ENCODE measurements at regions of chr3 and their contacts with region 1.

Region 1: DNA sequence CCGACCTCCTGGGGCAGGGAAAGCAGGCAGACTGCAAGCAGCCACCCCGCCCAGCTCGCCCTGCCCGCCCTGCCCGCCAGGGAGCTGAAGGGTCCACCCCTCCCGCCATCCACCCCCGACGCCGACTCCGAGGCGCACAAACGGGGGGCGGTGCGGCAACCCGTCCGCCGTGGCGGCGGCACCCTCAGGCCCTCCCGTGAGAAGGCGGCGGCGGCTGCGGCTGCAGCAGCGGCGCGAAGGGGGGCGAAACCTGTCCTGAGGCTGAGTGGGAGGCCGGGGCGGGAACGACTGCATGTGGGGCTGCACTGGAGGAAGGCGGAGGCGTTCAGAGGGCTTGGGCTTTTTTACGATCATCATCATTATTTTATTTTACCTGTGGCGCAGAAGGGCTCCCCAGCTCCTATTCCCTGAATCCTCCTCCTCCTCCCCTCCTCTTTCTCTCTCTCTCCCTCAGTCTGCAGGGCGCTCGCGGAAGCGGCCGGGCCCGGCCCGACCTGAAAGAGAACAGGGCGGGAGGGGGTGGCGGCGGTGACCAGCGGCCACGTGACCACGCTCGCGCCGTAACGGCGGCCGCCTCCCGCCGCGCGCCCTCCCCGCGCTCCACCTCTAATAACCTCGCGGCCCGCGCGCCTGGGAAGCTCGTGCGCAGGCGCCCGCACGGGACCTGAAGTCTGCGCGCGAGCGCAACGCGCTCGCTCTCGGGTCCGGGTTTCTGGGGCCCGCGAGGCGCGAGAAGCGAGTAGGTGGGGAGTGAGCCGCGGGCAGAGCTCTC is at the start of gene TBC1D5:
- DNase-seq: peak; percentile 96 to 99
- ATAC-seq: peak; percentile 96 to 97 (median 96)
- H3K4me3 ChIP-seq: peak within 1 kb of the TSS; percentile 94
- H3K27ac ChIP-seq: peak within 1 kb of the TSS; percentile 95
- H3K4me1 ChIP-seq: peaks cover 19% of the 10 kb centered on the region
- H3K27me3 ChIP-seq: no peaks in the 10 kb centered on the region
- CTCF ChIP-seq: no peak
- total RNA-seq, gene TBC1D5: 10.6 to 20.4 (median 18.2) TPM

Region 2: DNA sequence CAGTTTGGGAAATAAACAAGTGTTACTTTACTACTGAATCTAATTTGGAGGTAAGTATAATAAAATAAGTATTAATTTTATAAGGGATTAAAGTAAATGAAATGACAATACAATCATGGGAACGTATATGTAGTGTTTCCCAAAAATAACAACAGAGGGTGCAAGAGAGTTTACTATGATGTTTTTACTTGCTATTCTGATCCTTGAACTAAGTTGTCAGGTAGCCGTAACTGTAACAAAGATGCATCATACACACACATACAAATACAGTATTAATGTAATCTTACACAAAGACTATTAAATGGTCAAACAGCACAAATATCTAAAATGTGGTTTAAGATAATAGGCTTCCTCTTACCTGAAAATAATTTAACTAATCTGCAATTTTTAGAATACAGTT is 311.3 kb before region 1 on chr3:
- intact Hi-C with region 1: loop called in 1 of 2 experiments (anchors 10 kb)
- DNase-seq: no peak
- ATAC-seq: peak; percentile 53 to 85 (median 72)
- H3K4me3 ChIP-seq: no peak overlapping the region
- H3K27ac ChIP-seq: no peak overlapping the region
- H3K4me1 ChIP-seq: peaks cover 9% of the 10 kb centered on the region
- H3K27me3 ChIP-seq: no peaks in the 10 kb centered on the region
- CTCF ChIP-seq: peak; percentile 55

Region 3: DNA sequence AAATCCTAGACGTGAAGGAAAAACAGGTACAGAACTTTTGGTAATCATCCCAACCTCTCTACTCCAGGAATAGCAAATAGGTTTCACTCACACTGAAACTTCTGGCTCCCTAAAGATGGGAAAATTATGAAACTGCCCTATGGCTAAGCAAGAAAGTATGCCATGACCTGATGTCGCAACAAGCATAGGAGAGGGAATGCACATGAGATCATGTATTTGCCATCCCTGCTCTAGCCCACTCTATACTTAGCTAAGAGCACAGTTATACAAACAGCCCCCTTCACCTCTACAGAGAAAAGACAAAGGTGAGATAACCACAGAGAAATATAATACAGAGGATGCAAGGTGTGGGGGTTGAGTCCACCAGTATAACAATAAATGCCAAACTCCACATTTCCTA is 102.5 kb before region 1 on chr3:
- intact Hi-C with region 1: loop called in 1 of 2 experiments (anchors 5 kb)
- DNase-seq: no peak
- ATAC-seq: peak; percentile 77 to 96 (median 95)
- H3K4me3 ChIP-seq: no peak overlapping the region
- H3K27ac ChIP-seq: no peak overlapping the region
- H3K4me1 ChIP-seq: peaks cover 35% of the 10 kb centered on the region
- H3K27me3 ChIP-seq: no peaks in the 10 kb centered on the region
- CTCF ChIP-seq: no peak